Activated CD8-positive, alpha-beta T cell treated with anti-CD3 and anti-CD28 coated beads for 36 hours (primary cell): ENCODE measurements at regions of chr21 and their contacts with region 1.

Region 1: DNA sequence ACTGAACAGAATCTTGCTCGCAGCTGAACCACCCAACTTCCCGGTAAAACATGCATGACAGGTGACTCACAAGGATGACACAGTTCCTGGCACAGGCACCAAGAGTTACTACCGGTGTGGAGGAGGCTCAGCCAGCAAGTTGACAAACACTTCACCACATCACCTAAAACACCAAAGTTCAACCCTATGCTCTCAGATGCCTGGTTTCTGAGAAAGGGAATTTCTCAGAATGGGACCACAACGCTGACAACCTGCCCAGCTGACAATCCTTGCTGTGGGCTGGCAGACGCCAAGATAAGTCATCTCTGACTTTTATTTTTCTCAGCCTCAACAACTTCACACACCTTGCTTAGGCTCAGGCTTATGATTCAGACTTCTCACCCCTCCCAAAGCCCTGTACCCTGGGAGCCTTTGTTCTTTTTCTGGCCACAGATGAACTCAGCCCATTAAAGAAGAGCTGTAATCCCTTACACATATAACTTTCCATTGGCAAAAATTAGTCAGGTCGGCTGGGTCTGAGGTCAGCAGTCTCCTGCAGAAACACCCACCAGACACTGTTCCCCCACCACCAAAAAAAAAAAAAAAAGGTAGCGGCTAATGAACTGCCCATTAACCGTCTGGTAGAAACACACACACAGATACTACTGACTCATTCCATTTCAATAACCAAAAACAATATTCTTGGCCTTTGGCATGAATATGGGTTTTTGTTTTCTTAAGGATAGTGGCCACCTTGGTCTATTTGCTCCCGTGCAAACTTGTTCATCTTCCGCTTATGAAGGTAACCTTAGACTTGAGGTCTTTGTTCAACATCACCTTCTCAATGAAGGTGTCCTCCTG is 10.8 kb upstream of the TIAM1 start:
- DNase-seq: peak; percentile 88
- ATAC-seq: peak; percentile 90
- H3K4me3 Mint-ChIP-seq: peak overlapping the region; percentile 41
- H3K27ac Mint-ChIP-seq: peak overlapping the region; percentile 74
- H3K4me1 Mint-ChIP-seq: peaks cover 44% of the 10 kb centered on the region
- H3K27me3 Mint-ChIP-seq: no peaks in the 10 kb centered on the region
- CTCF ChIP-seq: no peak

Region 2: DNA sequence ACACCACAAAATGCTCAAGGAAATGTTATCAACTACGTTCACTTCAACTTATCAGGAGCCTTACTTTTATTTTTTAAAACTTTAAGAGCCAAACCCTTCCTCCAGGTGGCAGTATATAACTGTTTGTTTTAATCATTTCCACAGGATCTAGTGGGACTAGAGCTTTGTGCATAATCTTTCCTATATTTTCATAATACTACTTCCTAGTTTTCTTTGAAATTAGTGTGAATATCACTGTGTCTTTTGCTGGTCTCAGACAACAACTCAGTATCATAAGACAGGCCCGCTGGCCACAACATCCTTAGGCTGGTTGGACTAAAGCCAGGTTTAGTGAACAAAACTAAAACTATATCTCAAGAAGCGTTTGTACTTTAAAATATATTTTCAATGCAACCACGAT is 156.2 kb before region 1 on chr21:
- CTCF ChIA-PET with region 1: interaction called, 6 read pairs
- POLR2A ChIA-PET with region 1: no interaction called
- intact Hi-C with region 1: loop called (anchors 5 kb)
- DNase-seq: no peak
- ATAC-seq: peak; percentile 58
- H3K4me3 Mint-ChIP-seq: no peak overlapping the region
- H3K27ac Mint-ChIP-seq: no peak overlapping the region
- H3K4me1 Mint-ChIP-seq: peaks cover 48% of the 10 kb centered on the region
- H3K27me3 Mint-ChIP-seq: no peaks in the 10 kb centered on the region
- CTCF ChIP-seq: peak; percentile 73

Region 3: GRCh38 chr21:31255896-31256295 is 98.9 kb before region 1 on chr21:
- CTCF ChIA-PET with region 1: no interaction called
- POLR2A ChIA-PET with region 1: no interaction called
- intact Hi-C with region 1: no loop called
- DNase-seq: no peak
- ATAC-seq: no peak
- H3K4me3 Mint-ChIP-seq: no peak overlapping the region
- H3K27ac Mint-ChIP-seq: no peak overlapping the region
- H3K4me1 Mint-ChIP-seq: peaks cover 2% of the 10 kb centered on the region
- H3K27me3 Mint-ChIP-seq: no peaks in the 10 kb centered on the region
- CTCF ChIP-seq: no peak

Region 4: GRCh38 chr21:31310750-31311149 is 44.1 kb before region 1 on chr21:
- CTCF ChIA-PET with region 1: no interaction called
- POLR2A ChIA-PET with region 1: no interaction called
- intact Hi-C with region 1: no loop called
- DNase-seq: no peak
- ATAC-seq: no peak
- H3K4me3 Mint-ChIP-seq: no peak overlapping the region
- H3K27ac Mint-ChIP-seq: no peak overlapping the region
- H3K4me1 Mint-ChIP-seq: peaks cover 2% of the 10 kb centered on the region
- H3K27me3 Mint-ChIP-seq: no peaks in the 10 kb centered on the region
- CTCF ChIP-seq: no peak

Region 5: DNA sequence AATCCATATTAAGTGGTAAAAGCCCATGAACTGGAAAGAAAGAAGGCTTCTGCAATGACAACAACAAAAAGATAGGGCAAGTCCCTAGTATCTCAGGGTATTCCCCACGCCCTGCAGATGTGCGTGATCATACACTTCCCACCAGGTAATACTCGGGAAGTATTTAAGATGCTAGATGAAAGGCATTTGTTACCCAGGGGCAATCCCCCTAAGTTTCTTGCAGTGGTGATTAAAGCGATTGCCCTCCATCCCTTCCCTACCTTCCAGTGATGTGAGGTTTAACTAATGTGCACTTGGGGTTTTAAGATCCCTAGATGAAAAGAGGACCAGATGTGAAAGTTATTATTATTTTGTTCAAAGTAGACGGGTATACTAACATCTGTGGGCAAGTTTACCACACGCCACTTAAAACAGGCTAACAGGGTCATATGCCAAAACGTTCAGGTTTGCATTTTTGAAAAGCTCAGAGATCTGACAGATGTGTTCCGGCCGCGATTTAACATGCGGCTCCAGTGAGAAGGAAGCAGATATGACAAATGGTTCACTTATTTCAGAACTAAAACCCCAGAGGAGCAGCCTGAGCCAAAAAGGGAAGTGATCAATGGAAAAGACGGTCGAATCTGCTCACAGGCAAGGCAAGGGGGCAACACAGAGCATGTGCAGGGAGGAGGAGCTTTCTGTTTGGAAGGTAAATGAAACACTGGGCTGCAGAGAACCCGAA is 28.1 kb before region 1 on chr21:
- CTCF ChIA-PET with region 1: no interaction called
- POLR2A ChIA-PET with region 1: interaction called, 8 read pairs
- intact Hi-C with region 1: loop called (anchors 2 kb)
- DNase-seq: peak; percentile 82
- ATAC-seq: peak; percentile 90
- H3K4me3 Mint-ChIP-seq: peak overlapping the region; percentile 53
- H3K27ac Mint-ChIP-seq: peak overlapping the region; percentile 86
- H3K4me1 Mint-ChIP-seq: peaks cover 24% of the 10 kb centered on the region
- H3K27me3 Mint-ChIP-seq: no peaks in the 10 kb centered on the region
- CTCF ChIP-seq: no peak

Region 6: GRCh38 chr21:31343680-31344480 is 10.9 kb before region 1 on chr21 and contains the start of gene TIAM1:
- CTCF ChIA-PET with region 1: interaction called, 5 read pairs
- POLR2A ChIA-PET with region 1: interaction called, 26 read pairs
- intact Hi-C with region 1: no loop called
- DNase-seq: peak; percentile 47
- ATAC-seq: peak; percentile 73
- H3K4me3 Mint-ChIP-seq: peak within 1 kb of the TSS; percentile 84
- H3K27ac Mint-ChIP-seq: peak within 1 kb of the TSS; percentile 80
- H3K4me1 Mint-ChIP-seq: peaks cover 47% of the 10 kb centered on the region
- H3K27me3 Mint-ChIP-seq: peaks cover 3% of the 10 kb centered on the region
- CTCF ChIP-seq: no peak
- total RNA-seq, gene TIAM1: 34.9 to 38.5 TPM